K562 (cell line): ENCODE measurements at regions of chr9 and their contacts with region 1.

Region 1: DNA sequence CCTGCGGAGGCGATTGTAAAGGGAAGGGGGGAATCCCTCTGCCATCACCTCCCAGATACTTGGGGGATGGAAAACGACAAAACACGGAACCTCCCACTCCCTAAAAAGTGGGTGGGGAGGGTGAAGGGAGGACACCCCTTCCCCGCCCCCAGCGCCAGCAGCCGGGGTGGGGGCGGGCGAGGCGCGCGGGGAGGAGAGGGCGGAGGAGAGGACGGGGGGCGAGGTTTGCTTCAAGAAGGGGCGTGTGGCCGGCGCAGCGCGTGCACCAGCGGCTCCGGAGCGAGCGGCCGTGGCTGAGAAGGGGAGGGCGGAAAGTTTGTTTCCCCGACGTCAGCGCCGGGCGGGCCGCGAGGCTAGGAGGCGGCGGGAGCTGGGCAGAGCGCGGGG is at the start of gene PRRX2:
- DNase-seq: peak in 2 of 4 experiments; percentile 67 to 69
- ATAC-seq: peak; percentile 32; the same call in 2 of the 3 replicates
- H3K4me3 ChIP-seq: no peak within 1 kb of the TSS
- H3K27ac ChIP-seq: no peak within 1 kb of the TSS
- H3K4me1 ChIP-seq: peaks cover 0 to 28% of the 10 kb centered on the region in 2 experiments; a peak in 2 of 5 replicates
- H3K27me3 ChIP-seq: peaks cover 23 to 44% of the 10 kb centered on the region in 2 experiments
- CTCF ChIP-seq: no peak
- EP300 ChIP-seq: no peak
- POLR2A ChIP-seq: no peak
- RAD21 ChIP-seq: no peak
- polyA plus RNA-seq, gene PRRX2: not detected

Region 2: DNA sequence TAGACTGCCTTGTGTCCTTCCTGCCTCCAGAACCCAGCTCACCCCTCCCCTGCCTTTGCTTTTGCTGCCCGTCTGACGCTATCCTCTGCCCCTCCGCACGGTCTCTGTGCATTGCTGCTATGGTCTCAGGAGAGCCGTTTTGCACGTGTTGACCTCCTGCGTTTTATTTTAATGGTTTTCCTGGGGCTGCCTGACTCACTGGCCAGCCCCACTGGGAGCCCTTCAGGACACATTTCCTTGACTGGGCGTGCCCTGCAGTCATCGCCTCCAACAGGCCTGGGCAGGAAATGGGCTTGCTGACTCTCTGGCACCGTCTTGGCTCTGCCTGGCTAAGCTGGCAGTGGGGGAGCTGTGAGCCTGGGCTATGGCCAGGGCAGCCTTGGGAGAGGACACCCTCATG is 761.5 kb after region 1 on chr9:
- CTCF ChIA-PET with region 1: no interaction called
- POLR2A ChIA-PET with region 1: no interaction called
- in situ Hi-C with region 1: loop called (anchors 10 kb)
- intact Hi-C with region 1: no loop called
- DNase-seq: no peak
- ATAC-seq: no peak
- H3K4me3 ChIP-seq: no peak overlapping the region
- H3K27ac ChIP-seq: no peak overlapping the region
- H3K4me1 ChIP-seq: peaks cover 0 to 31% of the 10 kb centered on the region in 2 experiments; a peak in 2 of 5 replicates
- H3K27me3 ChIP-seq: peaks cover 45 to 89% of the 10 kb centered on the region in 2 experiments; a peak in 4 of 5 replicates
- CTCF ChIP-seq: no peak
- EP300 ChIP-seq: no peak
- POLR2A ChIP-seq: no peak
- RAD21 ChIP-seq: no peak